Gastrocnemius medialis (tissue), 4 donors: ENCODE measurements at regions of chr7 and their contacts with region 1.

Region 1: DNA sequence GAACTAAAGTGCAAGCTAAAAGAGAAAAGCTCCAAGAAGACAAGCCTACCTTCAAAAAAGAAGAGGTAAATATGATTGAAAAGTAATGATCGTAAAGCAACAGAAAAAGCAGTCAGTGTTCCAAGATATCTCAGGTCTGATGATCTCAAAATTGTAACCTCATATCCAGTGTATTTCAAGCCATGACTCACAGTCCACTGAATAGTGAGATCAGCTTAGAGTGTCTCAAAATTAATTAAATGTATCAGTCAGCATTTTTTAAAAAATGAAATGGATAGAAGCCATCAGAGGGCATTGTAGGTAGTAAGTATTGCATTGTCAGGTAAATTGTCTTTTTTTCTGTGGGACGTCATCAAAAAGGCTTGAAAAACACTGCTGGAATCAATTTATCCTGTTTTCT is 50.6 kb upstream of the AGBL3 start:
- DNase-seq: no peak
- ATAC-seq: peak; percentile 80 to 86
- H3K4me3 ChIP-seq: no peak overlapping the region
- H3K27ac ChIP-seq: peak overlapping the region in 3 of 4 donors; percentile 16 to 42 (median 32)
- H3K4me1 ChIP-seq: peaks cover 0 to 9% of the 10 kb centered on the region in 2 donors
- H3K27me3 ChIP-seq: no peaks in the 10 kb centered on the region
- CTCF ChIP-seq: no peak
- POLR2A ChIP-seq: no peak

Region 2: DNA sequence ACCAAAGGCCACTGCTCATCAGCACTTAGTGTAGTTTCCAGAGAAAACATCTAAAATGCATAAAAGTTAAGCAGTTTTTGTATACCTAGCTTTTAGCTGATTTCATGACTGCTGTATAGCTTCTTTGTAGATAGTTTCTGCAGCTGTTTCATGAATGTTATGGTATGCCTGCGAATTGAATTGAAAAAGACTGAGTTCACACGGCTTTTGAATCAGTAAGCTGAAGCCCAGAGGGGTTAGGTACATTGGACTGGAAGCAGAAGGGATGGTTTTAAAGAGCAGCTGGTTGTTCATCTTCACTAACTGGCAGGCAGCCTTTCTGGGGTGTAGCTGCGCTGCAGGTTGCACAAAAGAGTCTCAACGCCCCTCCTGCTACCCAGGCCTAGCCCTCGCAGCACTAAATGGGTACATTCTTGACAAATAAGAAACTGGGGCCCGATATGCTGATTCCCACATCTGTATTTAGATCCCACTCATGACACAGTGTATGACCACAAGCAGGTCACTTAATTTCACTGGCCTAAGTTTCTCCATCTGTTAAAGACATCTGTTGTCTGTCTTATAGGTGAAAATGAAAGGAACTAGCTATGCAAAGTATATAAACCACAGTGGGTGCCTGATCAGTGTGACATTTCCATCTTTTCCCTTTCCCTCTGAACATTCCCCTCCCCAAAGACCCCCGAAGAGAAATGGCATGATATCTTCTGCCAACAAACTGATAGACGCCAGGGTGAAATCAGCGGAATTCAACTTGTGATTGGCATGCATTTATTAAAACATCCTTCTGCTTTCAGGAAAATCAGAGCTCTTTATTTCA is 35.3 kb before region 1 on chr7:
- in situ Hi-C with region 1: no loop called
- intact Hi-C with region 1: loop called (anchors 5 kb)
- DNase-seq: no peak
- ATAC-seq: no peak
- H3K4me3 ChIP-seq: no peak overlapping the region
- H3K27ac ChIP-seq: peak overlapping the region in 1 of 4 donors; percentile 1
- H3K4me1 ChIP-seq: peaks cover 0 to 11% of the 10 kb centered on the region in 2 donors
- H3K27me3 ChIP-seq: no peaks in the 10 kb centered on the region
- CTCF ChIP-seq: no peak
- POLR2A ChIP-seq: no peak